CD14-positive monocyte (primary cell): ENCODE measurements at regions of chr16 and their contacts with region 1.

Region 1: GRCh38 chr16:85986931-85987749 is 88.2 kb downstream of the IRF8 start:
- DNase-seq: peak in 2 of 3 donors; percentile 32 to 47
- H3K4me3 ChIP-seq: peak overlapping the region in 1 of 3 experiments; percentile 1
- H3K4me3 Mint-ChIP-seq: peak overlapping the region in 1 of 2 donors; percentile 12
- H3K27ac ChIP-seq: peak overlapping the region in 1 of 2 donors; percentile 3
- H3K27ac Mint-ChIP-seq: peak overlapping the region; percentile 9 to 99 (median 82)
- H3K4me1 ChIP-seq: peaks cover 54 to 56% of the 10 kb centered on the region in 2 donors
- H3K4me1 Mint-ChIP-seq: peaks cover 57% of the 10 kb centered on the region
- H3K27me3 ChIP-seq: no peaks in the 10 kb centered on the region
- H3K27me3 Mint-ChIP-seq: peaks cover 0 to 5% (median 3%) of the 10 kb centered on the region in 3 donors
- CTCF ChIP-seq: peak; percentile 74

Region 2: DNA sequence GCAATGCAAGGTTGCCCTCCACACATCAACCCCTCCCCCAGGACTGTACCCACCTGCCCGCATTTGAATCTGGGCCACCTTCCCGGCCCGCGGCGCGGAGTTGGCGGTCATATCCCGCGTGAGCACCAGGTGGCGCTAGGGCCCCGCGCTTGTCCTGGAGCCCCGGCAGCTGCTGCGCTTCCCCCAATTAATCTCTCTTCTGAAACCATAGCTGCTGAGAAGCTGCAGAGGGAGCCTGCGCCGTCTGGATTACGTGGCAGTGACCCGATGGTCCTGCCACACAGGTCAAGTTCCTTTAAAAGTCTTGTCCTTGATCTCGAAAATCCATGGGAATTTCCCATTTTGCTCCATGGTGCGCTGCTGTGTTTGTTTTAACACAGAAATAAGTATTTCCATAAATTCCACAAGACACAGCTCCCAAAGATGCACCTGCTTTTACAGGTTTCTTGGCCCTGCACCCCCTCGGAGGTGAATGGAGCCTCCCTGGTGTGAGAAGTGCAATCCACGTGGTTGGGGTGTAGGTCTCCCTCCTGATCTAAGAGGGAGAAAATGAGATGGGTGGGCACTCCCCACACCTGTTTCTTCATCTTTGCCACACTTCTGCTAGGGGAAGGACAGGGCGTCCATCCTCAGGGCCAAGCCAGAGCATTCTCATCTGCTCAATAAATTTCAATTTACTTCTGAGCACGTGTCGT is 165.6 kb before region 1 on chr16:
- intact Hi-C with region 1: loop called (anchors 1 to 2 kb)
- DNase-seq: peak; percentile 81 to 97 (median 85)
- H3K4me3 ChIP-seq: no peak overlapping the region
- H3K4me3 Mint-ChIP-seq: no peak overlapping the region
- H3K27ac ChIP-seq: no peak overlapping the region
- H3K27ac Mint-ChIP-seq: peak overlapping the region in 3 of 7 donors; percentile 3 to 76 (median 74)
- H3K4me1 ChIP-seq: peaks cover 18 to 22% of the 10 kb centered on the region in 2 donors
- H3K4me1 Mint-ChIP-seq: peaks cover 28% of the 10 kb centered on the region
- H3K27me3 ChIP-seq: peaks cover 0 to 2% of the 10 kb centered on the region in 2 donors
- H3K27me3 Mint-ChIP-seq: peaks cover 3 to 8% (median 3%) of the 10 kb centered on the region in 3 donors
- CTCF ChIP-seq: peak; percentile 99

Region 3: DNA sequence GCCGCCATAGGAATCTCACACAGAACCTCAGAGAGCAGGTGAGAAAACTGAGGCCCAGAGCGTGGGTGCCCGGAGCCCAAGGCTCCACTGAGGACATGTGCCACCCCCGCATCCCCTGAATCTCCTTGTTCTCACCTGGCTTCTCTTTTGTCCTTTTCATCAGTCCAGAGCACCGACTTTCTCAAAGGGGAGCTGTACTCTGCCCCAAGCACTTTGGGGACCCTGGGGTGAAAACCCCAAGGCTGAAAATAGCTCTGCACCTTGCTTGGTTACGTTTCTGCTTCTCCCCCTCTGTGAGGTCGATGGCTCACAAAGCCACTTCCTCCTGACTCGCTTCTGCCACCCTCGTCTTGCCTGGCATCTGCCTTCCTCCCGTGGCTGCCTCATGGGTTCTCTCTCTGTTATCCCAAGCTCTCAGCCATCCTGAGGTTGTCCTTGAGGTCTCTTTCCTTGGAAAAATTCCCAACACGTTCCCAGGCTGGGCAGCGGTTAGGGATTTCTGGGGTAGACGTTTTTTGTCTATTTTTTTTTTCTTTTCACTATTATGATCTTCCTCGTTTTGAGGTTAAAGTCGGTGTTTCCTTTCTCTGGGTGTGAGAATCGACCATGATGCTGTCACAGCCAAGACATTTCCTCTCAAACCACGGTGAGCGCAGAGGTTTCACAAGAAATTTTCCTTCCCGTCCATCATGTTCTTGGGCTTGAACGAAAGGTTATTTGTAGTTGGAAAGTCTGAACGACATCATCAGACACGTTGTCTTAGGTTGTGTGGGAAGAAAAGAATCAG is 51.0 kb before region 1 on chr16:
- intact Hi-C with region 1: loop called in 1 of 2 experiments (anchors 5 kb)
- DNase-seq: peak; percentile 76 to 85 (median 80)
- H3K4me3 ChIP-seq: peak overlapping the region in 1 of 3 experiments; percentile 44
- H3K4me3 Mint-ChIP-seq: peak overlapping the region; percentile 57 to 82
- H3K27ac ChIP-seq: peak overlapping the region; percentile 85 to 93
- H3K27ac Mint-ChIP-seq: peak overlapping the region; percentile 95 to 98 (median 97)
- H3K4me1 ChIP-seq: peaks cover 62 to 66% of the 10 kb centered on the region in 2 donors
- H3K4me1 Mint-ChIP-seq: peaks cover 67% of the 10 kb centered on the region
- H3K27me3 ChIP-seq: no peaks in the 10 kb centered on the region
- H3K27me3 Mint-ChIP-seq: peaks cover 0 to 2% (median 0%) of the 10 kb centered on the region in 3 donors
- CTCF ChIP-seq: no peak

Region 4: DNA sequence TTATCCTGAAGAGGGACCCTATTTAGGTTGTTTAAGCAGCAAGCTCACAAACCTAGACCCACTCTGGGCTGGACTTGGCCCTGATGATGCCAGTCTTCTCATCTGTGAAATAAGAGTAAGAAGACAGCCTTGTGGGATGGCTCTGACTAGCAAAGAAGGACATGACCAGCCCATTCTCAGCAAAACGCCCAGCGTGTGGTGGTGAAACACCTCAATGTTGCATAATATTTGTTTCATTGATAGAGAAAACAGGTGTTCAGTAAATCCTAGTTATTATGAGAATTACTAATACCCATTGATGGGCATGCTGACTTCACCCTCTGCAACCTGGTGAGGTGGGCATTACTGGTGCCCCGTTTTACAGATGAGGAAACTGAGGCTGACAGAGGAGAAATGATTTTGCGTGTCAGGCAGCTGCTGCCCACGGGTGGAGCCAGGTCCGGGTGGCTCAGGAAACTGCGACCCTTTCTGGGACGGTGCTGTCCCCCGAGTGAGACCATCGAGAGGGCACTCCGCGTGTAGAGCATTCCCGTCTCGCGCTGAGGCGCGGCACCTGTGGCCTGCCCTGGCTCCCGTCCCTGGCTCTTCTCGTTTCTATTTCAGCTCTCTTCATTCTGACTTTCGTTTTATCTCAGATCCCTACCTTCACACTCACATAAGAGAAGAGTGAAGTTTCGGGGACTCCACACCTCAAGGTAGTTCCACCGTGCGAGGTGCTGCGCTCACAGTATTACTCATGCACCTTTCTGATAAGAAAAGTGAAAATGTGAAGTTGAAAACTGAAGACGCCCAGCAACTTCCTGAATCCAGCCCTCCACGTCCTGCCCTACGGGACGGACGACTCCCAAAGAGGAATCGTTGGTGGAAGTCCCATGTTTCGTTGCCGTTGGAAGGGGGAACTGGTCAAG is 39.7 kb before region 1 on chr16:
- intact Hi-C with region 1: loop called in 1 of 2 experiments (anchors 5 kb)
- DNase-seq: peak in 2 of 3 donors; percentile 66 to 73
- H3K4me3 ChIP-seq: peak overlapping the region; percentile 36 to 80 (median 45)
- H3K4me3 Mint-ChIP-seq: peak overlapping the region; percentile 87 to 98
- H3K27ac ChIP-seq: no peak overlapping the region
- H3K27ac Mint-ChIP-seq: peak overlapping the region in 6 of 7 donors; percentile 35 to 77 (median 72)
- H3K4me1 ChIP-seq: peaks cover 43 to 51% of the 10 kb centered on the region in 2 donors
- H3K4me1 Mint-ChIP-seq: peaks cover 60% of the 10 kb centered on the region
- H3K27me3 ChIP-seq: no peaks in the 10 kb centered on the region
- H3K27me3 Mint-ChIP-seq: peaks cover 0 to 18% (median 5%) of the 10 kb centered on the region in 3 donors
- CTCF ChIP-seq: no peak

Region 5: DNA sequence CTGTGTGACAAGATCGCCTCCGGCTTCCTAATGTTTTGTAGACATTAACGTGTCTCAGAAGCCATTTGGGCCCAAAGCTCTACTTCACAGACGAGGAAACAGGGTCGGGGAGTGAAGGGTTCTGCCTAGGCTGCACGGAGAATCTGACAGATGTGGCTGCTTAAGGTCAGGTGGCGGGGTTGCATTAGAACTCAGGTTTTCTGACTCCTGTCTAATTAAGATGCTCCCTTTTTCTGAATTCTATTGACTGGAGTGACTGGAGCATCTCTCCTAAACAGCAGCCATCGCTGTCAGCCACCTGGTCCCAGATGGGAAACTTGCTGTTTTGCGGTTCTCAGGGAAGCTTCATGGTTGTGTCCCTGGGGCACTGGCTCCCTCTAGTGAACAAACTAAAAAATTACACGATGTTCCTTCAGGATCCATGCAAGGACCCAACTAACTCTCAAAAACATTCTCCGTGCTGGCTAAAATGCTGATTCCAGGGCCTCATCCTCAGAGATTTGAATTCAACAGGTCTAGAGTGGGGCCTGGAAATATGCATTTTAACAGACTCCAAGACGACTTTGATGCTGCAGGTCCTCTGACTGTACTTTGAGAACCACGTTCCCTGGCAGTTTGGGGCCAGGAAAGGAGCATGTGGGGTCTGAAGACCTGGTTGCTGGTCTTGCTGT is 29.2 kb after region 1 on chr16:
- intact Hi-C with region 1: loop called in 1 of 2 experiments (anchors 5 kb)
- DNase-seq: peak; percentile 54 to 74 (median 70)
- H3K4me3 ChIP-seq: no peak overlapping the region
- H3K4me3 Mint-ChIP-seq: peak overlapping the region in 1 of 2 donors; percentile 43
- H3K27ac ChIP-seq: no peak overlapping the region
- H3K27ac Mint-ChIP-seq: peak overlapping the region in 4 of 7 donors; percentile 20 to 72 (median 54)
- H3K4me1 ChIP-seq: peaks cover 17 to 19% of the 10 kb centered on the region in 2 donors
- H3K4me1 Mint-ChIP-seq: peaks cover 25% of the 10 kb centered on the region
- H3K27me3 ChIP-seq: no peaks in the 10 kb centered on the region
- H3K27me3 Mint-ChIP-seq: peaks cover 9 to 24% (median 12%) of the 10 kb centered on the region in 3 donors
- CTCF ChIP-seq: peak; percentile 90